Posterior cingulate gyrus (tissue), 11 donors: ENCODE measurements at regions of chr9 and their contacts with region 1.

Region 1: GRCh38 chr9:38088006-38088925 is 19.2 kb upstream of the SHB start:
- DNase-seq: peak; percentile 36 to 96 (median 82)

Region 2: GRCh38 chr9:38127271-38127882 is 39.1 kb after region 1 on chr9:
- intact Hi-C with region 1: no loop called
- DNase-seq: no peak

Region 3: GRCh38 chr9:38339087-38339486 is 250.8 kb after region 1 on chr9:
- intact Hi-C with region 1: loop called (anchors 10 kb)
- DNase-seq: no peak